ENCODE measurements at regions of chr15 and their contacts with region 1.

Region 1: GRCh38 chr15:45611305-45611704 is 23.5 kb upstream of the SQOR start:
- DNase-seq: peak in 1 of 3 donors; percentile 41
- H3K4me3 ChIP-seq: no peak overlapping the region
- H3K4me3 Mint-ChIP-seq: no peak overlapping the region
- H3K27ac ChIP-seq: no peak overlapping the region
- H3K27ac Mint-ChIP-seq: no peak overlapping the region
- H3K4me1 ChIP-seq: peaks cover 9 to 10% of the 10 kb centered on the region in 2 donors
- H3K4me1 Mint-ChIP-seq: peaks cover 10% of the 10 kb centered on the region
- H3K27me3 ChIP-seq: no peaks in the 10 kb centered on the region
- H3K27me3 Mint-ChIP-seq: peaks cover 0 to 2% (median 0%) of the 10 kb centered on the region in 3 donors
- CTCF ChIP-seq: peak; percentile 76

Region 2: GRCh38 chr15:44775953-44776352 is 835.4 kb before region 1 on chr15:
- intact Hi-C with region 1: no loop called
- DNase-seq: no peak
- H3K4me3 ChIP-seq: no peak overlapping the region
- H3K4me3 Mint-ChIP-seq: no peak overlapping the region
- H3K27ac ChIP-seq: no peak overlapping the region
- H3K27ac Mint-ChIP-seq: no peak overlapping the region
- H3K4me1 ChIP-seq: no peaks in the 10 kb centered on the region
- H3K4me1 Mint-ChIP-seq: no peaks in the 10 kb centered on the region
- H3K27me3 ChIP-seq: no peaks in the 10 kb centered on the region
- H3K27me3 Mint-ChIP-seq: peaks cover 0 to 5% (median 2%) of the 10 kb centered on the region in 3 donors
- CTCF ChIP-seq: no peak

Region 3: GRCh38 chr15:45429974-45430792 is 181.1 kb before region 1 on chr15:
- intact Hi-C with region 1: loop called (anchors 5 to 10 kb)
- DNase-seq: peak; percentile 74 to 89 (median 81)
- H3K4me3 ChIP-seq: peak overlapping the region; percentile 9 to 66 (median 17)
- H3K4me3 Mint-ChIP-seq: peak overlapping the region; percentile 75 to 82
- H3K27ac ChIP-seq: no peak overlapping the region
- H3K27ac Mint-ChIP-seq: peak overlapping the region in 2 of 7 donors; percentile 24 to 73
- H3K4me1 ChIP-seq: peaks cover 8 to 10% of the 10 kb centered on the region in 2 donors
- H3K4me1 Mint-ChIP-seq: peaks cover 7% of the 10 kb centered on the region
- H3K27me3 ChIP-seq: peaks cover 6 to 32% of the 10 kb centered on the region in 2 donors
- H3K27me3 Mint-ChIP-seq: peaks cover 29 to 36% (median 34%) of the 10 kb centered on the region in 3 donors
- CTCF ChIP-seq: peak; percentile 100

Region 4: DNA sequence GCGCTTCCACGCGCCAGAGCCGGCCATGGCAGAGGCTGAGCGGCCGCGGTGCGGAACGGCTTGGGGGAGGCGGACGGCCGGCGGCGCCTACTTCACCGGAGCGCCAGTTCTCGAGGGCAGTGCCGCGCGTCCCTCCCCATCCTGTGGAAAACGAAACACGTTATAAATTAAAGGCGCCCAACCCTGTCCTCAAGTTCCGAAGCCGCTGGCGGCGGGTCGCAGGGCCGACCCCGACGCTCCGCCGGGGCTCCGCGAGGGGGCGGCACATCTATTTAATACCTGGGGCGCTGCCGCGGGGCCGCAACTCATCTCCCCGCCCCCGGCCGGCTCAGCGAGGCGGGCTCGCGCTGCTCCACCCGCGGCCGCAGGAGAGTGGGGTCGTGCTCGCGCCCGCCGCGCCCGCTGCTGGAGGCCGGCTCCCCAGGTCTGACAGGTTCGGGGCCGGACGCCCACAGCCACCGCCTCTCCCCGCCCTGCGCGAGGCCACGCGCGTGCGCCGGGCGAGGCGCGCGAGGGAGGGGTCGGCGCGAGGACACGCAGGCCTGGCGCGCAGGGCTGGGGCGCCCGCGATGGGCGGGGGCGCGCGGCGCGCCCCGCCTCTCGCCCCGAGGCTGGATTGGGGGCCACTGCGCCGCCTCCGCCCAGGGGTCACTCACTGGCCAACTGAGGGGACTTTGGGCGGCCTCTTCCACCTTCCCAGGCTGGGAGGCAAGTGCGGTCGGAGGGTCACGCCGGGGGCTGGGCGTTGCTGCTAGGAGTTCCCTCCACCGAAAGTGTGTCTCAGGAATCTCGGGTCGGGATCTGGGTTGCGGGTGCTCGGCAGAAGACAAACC is 88.8 kb before region 1 on chr15 and contains the start of gene SLC30A4:
- intact Hi-C with region 1: loop called (anchors 10 kb)
- DNase-seq: peak; percentile 14 to 25 (median 17)
- H3K4me3 ChIP-seq: peak within 1 kb of the TSS; percentile 31 to 83 (median 44)
- H3K4me3 Mint-ChIP-seq: peak within 1 kb of the TSS; percentile 87 to 95
- H3K27ac ChIP-seq: no peak within 1 kb of the TSS
- H3K27ac Mint-ChIP-seq: peak within 1 kb of the TSS in 2 of 7 donors; percentile 30 to 50
- H3K4me1 ChIP-seq: peaks cover 14 to 17% of the 10 kb centered on the region in 2 donors
- H3K4me1 Mint-ChIP-seq: peaks cover 17% of the 10 kb centered on the region
- H3K27me3 ChIP-seq: peaks cover 31 to 52% of the 10 kb centered on the region in 2 donors
- H3K27me3 Mint-ChIP-seq: peaks cover 48 to 76% (median 61%) of the 10 kb centered on the region in 3 donors
- CTCF ChIP-seq: peak; percentile 16
- polyA plus RNA-seq, gene SLC30A4: 0.05 to 0.21 (median 0.17) TPM